Heart left ventricle (tissue), 16 donors: ENCODE measurements at regions of chr6 and their contacts with region 1.

Region 1: GRCh38 chr6:79269877-79270276 is 35.4 kb upstream of the HMGN3 start:
- DNase-seq: peak in 1 of 5 donors; percentile 23
- ATAC-seq: peak; percentile 86 to 99 (median 94)
- H3K4me3 ChIP-seq: no peak overlapping the region
- H3K27ac ChIP-seq: peak overlapping the region in 6 of 12 donors; percentile 33 to 62 (median 44)
- H3K4me1 ChIP-seq: peaks cover 0 to 15% (median 1%) of the 10 kb centered on the region in 12 donors
- H3K27me3 ChIP-seq: no peaks in the 10 kb centered on the region
- CTCF ChIP-seq: no peak
- POLR2A ChIP-seq: no peak

Region 2: GRCh38 chr6:79250107-79250514 is 19.8 kb before region 1 on chr6:
- intact Hi-C with region 1: loop called in 1 of 10 experiments (anchors 2 kb)
- DNase-seq: no peak
- ATAC-seq: peak; percentile 70 to 82 (median 76)
- H3K4me3 ChIP-seq: no peak overlapping the region
- H3K27ac ChIP-seq: no peak overlapping the region
- H3K4me1 ChIP-seq: peaks cover 0 to 7% (median 0%) of the 10 kb centered on the region in 12 donors
- H3K27me3 ChIP-seq: no peaks in the 10 kb centered on the region
- CTCF ChIP-seq: peak in 9 of 12 donors; percentile 12 to 51 (median 29)
- POLR2A ChIP-seq: no peak

Region 3: DNA sequence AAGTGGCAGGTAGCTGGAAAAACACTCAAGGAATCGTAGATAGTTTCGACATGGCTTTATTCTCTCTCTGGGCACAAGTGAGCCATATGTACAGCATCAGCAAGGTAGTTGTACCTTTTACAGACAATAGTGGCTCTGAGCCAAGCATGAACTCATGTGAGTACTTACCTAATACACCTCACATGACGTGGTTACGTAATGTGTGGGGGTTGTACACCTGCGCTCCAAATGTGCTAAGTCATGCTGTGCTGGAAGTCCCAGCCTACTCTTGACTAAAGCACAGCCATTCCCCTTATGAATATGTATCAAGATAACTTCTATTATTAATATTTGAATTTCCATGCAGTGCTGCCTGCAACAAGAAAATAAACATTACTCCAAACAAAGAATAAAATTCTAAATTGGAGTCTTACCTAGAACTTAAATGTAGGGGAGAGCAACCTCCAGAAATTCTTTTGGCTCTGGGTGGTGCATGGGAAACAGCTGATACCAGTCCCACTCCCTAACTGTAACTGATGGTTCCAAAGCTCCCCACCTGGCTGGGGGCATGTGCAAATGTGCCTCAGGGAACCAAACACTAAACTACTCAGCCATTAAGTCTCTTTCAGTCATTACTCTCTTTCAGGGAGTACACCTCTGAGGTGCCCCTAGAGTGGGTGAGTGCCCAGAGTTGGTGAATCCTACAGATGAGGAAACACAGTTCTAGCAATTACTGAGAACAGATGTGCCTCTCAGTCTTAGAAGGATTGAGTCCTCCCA is 43.6 kb after region 1 on chr6:
- intact Hi-C with region 1: no loop called
- DNase-seq: no peak
- ATAC-seq: no peak
- H3K4me3 ChIP-seq: no peak overlapping the region
- H3K27ac ChIP-seq: no peak overlapping the region
- H3K4me1 ChIP-seq: no peaks in the 10 kb centered on the region
- H3K27me3 ChIP-seq: no peaks in the 10 kb centered on the region
- CTCF ChIP-seq: no peak
- POLR2A ChIP-seq: no peak